Caco-2 (cell line): ENCODE measurements at regions of chr4 and their contacts with region 1.

Region 1: DNA sequence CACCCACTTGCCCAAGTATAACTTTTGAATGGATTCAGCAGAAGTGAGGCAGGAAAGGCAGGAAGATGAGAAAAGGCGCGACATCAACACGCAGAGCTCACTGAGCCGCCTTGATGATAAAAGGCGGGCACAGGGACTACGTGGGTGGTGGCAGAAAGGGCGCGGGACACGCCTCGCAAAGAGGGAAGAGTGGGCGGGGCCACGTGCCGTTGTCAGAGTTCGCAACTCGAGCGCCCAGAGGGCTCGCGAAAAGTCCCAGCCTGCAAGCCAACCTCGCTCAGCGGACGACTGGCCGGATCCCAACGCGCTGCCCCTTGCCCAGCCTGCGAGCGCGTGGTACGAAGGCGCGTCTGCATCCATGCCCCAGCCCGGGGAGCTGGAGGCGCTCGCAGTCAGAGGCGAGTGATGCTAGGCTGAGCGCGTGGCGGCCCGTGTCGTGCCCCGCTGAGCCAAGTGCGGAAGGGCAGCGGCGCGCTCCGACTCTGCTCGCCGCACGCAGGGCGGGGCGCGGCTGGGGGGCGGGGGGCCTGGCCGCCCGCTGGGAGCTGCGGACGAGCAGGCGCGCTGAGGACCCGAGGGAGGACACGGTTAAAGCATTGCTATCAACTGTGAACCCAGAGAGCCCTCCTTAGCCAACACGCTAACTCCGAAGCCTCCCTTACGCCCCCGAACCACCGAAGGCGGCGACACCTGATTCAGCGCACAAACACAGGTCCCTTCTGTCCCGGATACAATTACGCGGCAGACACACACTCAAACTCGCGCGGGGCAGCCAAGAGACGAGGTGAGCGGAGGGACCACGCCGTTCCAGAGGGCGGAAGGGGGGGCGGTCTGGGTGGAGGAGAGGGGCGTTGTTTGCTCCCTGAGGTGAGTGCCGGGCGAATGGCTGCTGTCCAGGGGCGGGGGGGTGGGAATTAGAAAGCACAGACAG is at the start of gene UGT8:
- DNase-seq: peak; percentile 70 to 75
- H3K4me3 ChIP-seq: peak within 1 kb of the TSS; percentile 77
- H3K4me3 Mint-ChIP-seq: peak within 1 kb of the TSS; percentile 96
- H3K27ac Mint-ChIP-seq: peak within 1 kb of the TSS; percentile 52
- H3K4me1 ChIP-seq: 0 out of 2 replicates have a peak, but pooled peaks cover 3% of the 10 kb centered on the region
- H3K4me1 Mint-ChIP-seq: peaks cover 8% of the 10 kb centered on the region
- H3K27me3 ChIP-seq: no peaks in the 10 kb centered on the region
- H3K27me3 Mint-ChIP-seq: peaks cover 4% of the 10 kb centered on the region
- CTCF ChIP-seq: no peak
- total RNA-seq, gene UGT8: 11.9 and 14.8 TPM in 2 replicates

Region 2: GRCh38 chr4:114582621-114583020 is 15.8 kb before region 1 on chr4:
- CTCF ChIA-PET with region 1: no interaction called
- POLR2A ChIA-PET with region 1: no interaction called
- intact Hi-C with region 1: loop called (anchors 2 kb)
- DNase-seq: peak in 1 of 2 experiments; percentile 21
- H3K4me3 ChIP-seq: no peak overlapping the region
- H3K4me3 Mint-ChIP-seq: no peak overlapping the region
- H3K27ac Mint-ChIP-seq: no peak overlapping the region
- H3K4me1 ChIP-seq: peaks cover 16% of the 10 kb centered on the region
- H3K4me1 Mint-ChIP-seq: no peaks in the 10 kb centered on the region
- H3K27me3 ChIP-seq: no peaks in the 10 kb centered on the region
- H3K27me3 Mint-ChIP-seq: no peaks in the 10 kb centered on the region
- CTCF ChIP-seq: no peak

Region 3: DNA sequence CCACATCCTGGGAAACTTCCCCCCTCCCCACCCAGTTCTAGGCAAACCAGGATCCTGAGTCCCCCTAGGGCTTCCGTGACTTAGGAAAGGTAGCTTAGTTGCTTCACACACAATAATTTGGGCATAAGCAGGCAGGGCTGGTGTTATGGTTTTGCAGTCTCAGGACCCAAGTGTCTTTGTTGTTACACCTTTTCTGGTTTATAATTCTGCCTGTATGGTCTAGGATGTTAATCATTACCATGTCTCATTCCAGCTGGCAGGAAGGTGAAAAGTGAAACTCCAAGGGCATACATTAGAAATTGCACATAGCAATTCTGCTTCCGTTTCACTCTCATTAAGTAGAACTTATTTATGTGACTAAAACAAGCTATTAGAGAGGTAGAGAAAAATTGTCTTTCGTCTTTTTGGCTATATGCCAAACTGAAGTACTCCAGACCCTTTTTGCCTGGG is 17.0 kb after region 1 on chr4:
- CTCF ChIA-PET with region 1: no interaction called
- POLR2A ChIA-PET with region 1: no interaction called
- intact Hi-C with region 1: loop called (anchors 1 kb)
- DNase-seq: no peak
- H3K4me3 ChIP-seq: peak overlapping the region; percentile 27
- H3K4me3 Mint-ChIP-seq: peak overlapping the region; percentile 78
- H3K27ac Mint-ChIP-seq: peak overlapping the region; percentile 91
- H3K4me1 ChIP-seq: peaks cover 13% of the 10 kb centered on the region
- H3K4me1 Mint-ChIP-seq: peaks cover 7% of the 10 kb centered on the region
- H3K27me3 ChIP-seq: no peaks in the 10 kb centered on the region
- H3K27me3 Mint-ChIP-seq: no peaks in the 10 kb centered on the region
- CTCF ChIP-seq: no peak